A673 (cell line): ENCODE measurements at regions of chr15 and their contacts with region 1.

Region 1: GRCh38 chr15:45457641-45458433 is 64.7 kb downstream of the SLC30A4 start:
- DNase-seq: peak; percentile 93
- H3K4me3 ChIP-seq: peak overlapping the region; percentile 47
- H3K27ac ChIP-seq: peak overlapping the region; percentile 60
- H3K4me1 ChIP-seq: peaks cover 8% of the 10 kb centered on the region
- H3K27me3 ChIP-seq: no peaks in the 10 kb centered on the region
- CTCF ChIP-seq: peak; percentile 72

Region 2: GRCh38 chr15:45166834-45167630 is 290.8 kb before region 1 on chr15:
- CTCF ChIA-PET with region 1: interaction called, 8 read pairs
- POLR2A ChIA-PET with region 1: no interaction called
- intact Hi-C with region 1: loop called (anchors 5 kb)
- DNase-seq: peak; percentile 93
- H3K4me3 ChIP-seq: peak overlapping the region; percentile 45
- H3K27ac ChIP-seq: peak overlapping the region; percentile 96
- H3K4me1 ChIP-seq: peaks cover 21% of the 10 kb centered on the region
- H3K27me3 ChIP-seq: no peaks in the 10 kb centered on the region
- CTCF ChIP-seq: peak; percentile 56

Region 3: GRCh38 chr15:45198337-45199135 is 259.3 kb before region 1 on chr15:
- CTCF ChIA-PET with region 1: no interaction called
- POLR2A ChIA-PET with region 1: no interaction called
- intact Hi-C with region 1: loop called (anchors 5 kb)
- DNase-seq: peak; percentile 96
- H3K4me3 ChIP-seq: peak overlapping the region; percentile 72
- H3K27ac ChIP-seq: peak overlapping the region; percentile 92
- H3K4me1 ChIP-seq: peaks cover 5% of the 10 kb centered on the region
- H3K27me3 ChIP-seq: no peaks in the 10 kb centered on the region
- CTCF ChIP-seq: peak; percentile 89

Region 4: GRCh38 chr15:45307230-45307924 is 150.5 kb before region 1 on chr15:
- CTCF ChIA-PET with region 1: no interaction called
- POLR2A ChIA-PET with region 1: no interaction called
- intact Hi-C with region 1: loop called (anchors 5 kb)
- DNase-seq: peak; percentile 56
- H3K4me3 ChIP-seq: peak overlapping the region; percentile 15
- H3K27ac ChIP-seq: no peak overlapping the region
- H3K4me1 ChIP-seq: no peaks in the 10 kb centered on the region
- H3K27me3 ChIP-seq: peaks cover 4% of the 10 kb centered on the region
- CTCF ChIP-seq: peak; percentile 66

Region 5: GRCh38 chr15:45429974-45430792 is 27.7 kb before region 1 on chr15:
- CTCF ChIA-PET with region 1: interaction called, 5 read pairs
- POLR2A ChIA-PET with region 1: no interaction called
- intact Hi-C with region 1: loop called (anchors 1 kb)
- DNase-seq: peak; percentile 59
- H3K4me3 ChIP-seq: no peak overlapping the region
- H3K27ac ChIP-seq: no peak overlapping the region
- H3K4me1 ChIP-seq: no peaks in the 10 kb centered on the region
- H3K27me3 ChIP-seq: no peaks in the 10 kb centered on the region
- CTCF ChIP-seq: peak; percentile 100

Region 6: DNA sequence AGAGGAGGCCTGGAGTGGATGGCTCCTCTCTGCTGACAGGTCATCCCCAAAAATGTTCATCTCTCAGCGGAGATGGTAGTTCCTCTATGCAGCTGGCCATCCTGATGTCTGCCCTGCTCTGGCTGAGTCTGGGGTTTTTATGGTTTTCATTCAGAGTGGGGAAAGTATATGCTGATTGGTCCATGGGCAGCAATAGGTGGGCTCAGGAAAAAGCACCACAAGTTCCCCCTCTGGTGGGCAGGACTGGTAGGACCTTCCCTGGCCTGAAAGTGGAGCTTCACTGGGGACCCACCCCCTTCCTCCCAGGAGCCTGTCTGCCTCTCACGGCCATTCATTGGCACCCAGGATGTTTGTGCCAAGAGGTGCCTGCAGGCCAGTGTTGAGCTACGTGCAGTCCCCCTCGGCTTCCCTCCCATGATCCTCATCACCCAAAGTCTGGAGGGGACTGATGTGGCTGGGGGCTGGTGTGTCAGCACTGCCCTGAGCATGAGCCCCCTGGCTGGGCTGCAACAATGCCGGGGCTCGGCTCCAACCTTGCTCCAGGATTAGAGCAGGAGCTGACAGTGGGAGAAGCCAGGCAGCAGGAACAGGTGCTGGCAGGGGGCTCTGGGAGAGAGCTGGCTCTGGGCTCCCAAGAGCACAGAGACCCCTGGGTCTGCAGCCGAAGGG is 116.3 kb after region 1 on chr15:
- CTCF ChIA-PET with region 1: interaction called, 4 read pairs
- POLR2A ChIA-PET with region 1: no interaction called
- intact Hi-C with region 1: loop called (anchors 1 kb)
- DNase-seq: peak; percentile 70
- H3K4me3 ChIP-seq: no peak overlapping the region
- H3K27ac ChIP-seq: no peak overlapping the region
- H3K4me1 ChIP-seq: no peaks in the 10 kb centered on the region
- H3K27me3 ChIP-seq: no peaks in the 10 kb centered on the region
- CTCF ChIP-seq: peak; percentile 72

Region 7: GRCh38 chr15:45611305-45611704 is 153.5 kb after region 1 on chr15:
- CTCF ChIA-PET with region 1: interaction called, 7 read pairs
- POLR2A ChIA-PET with region 1: no interaction called
- intact Hi-C with region 1: loop called (anchors 1 kb)
- DNase-seq: peak; percentile 40
- H3K4me3 ChIP-seq: no peak overlapping the region
- H3K27ac ChIP-seq: no peak overlapping the region
- H3K4me1 ChIP-seq: no peaks in the 10 kb centered on the region
- H3K27me3 ChIP-seq: no peaks in the 10 kb centered on the region
- CTCF ChIP-seq: peak; percentile 62